B cell (primary cell): ENCODE measurements at regions of chr3 and their contacts with region 1.

Region 1: DNA sequence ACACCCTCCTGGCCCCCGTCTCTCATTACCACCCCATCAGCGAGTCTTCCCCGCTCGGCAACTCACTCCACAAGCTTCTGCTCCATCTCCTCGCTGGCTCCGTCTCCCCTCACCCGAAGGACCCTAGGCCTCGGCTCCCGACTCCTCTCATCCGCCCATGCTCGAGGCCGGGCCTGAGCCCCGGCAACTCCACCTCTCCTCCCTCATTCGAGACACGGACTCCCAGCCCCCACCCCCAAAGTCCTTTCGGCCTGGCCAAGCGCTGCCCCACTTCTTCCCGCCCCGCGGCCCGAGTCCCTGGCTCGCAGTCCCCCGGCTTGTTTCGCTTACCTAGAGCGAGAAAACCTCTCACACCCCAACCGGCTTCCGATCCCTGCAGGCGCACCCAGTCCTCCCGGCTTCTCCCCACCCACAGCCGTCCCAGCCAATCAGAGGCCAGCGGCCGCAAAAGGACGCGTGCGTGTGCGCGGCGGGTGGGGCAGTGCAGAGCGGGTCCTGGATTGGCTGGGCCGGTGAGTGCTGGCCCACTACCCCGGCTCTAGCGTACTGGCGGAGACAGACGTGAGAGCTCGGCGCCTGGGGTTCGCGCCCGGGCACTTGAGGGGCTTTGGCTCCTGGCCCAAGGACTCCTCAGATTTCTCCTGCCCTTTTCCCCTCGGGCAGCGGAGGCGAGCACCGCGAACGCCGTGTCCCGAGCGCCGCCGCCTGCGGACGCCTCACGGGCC is at the start of gene HIGD1A:
- DNase-seq: peak; percentile 94
- ATAC-seq: peak; percentile 100
- H3K4me3 ChIP-seq: peak within 1 kb of the TSS; percentile 82 to 89 (median 87)
- H3K4me3 Mint-ChIP-seq: peak within 1 kb of the TSS; percentile 98
- H3K27ac ChIP-seq: peak within 1 kb of the TSS; percentile 70 to 84
- H3K27ac Mint-ChIP-seq: peak within 1 kb of the TSS; percentile 91
- H3K4me1 ChIP-seq: peaks cover 17 to 27% of the 10 kb centered on the region in 2 donors
- H3K4me1 Mint-ChIP-seq: peaks cover 38% of the 10 kb centered on the region
- H3K27me3 ChIP-seq: peaks cover 0 to 2% (median 0%) of the 10 kb centered on the region in 4 experiments
- H3K27me3 Mint-ChIP-seq: peaks cover 19% of the 10 kb centered on the region
- CTCF ChIP-seq: no peak
- total RNA-seq, gene HIGD1A: 16.5 and 18.4 TPM in 2 replicates

Region 2: DNA sequence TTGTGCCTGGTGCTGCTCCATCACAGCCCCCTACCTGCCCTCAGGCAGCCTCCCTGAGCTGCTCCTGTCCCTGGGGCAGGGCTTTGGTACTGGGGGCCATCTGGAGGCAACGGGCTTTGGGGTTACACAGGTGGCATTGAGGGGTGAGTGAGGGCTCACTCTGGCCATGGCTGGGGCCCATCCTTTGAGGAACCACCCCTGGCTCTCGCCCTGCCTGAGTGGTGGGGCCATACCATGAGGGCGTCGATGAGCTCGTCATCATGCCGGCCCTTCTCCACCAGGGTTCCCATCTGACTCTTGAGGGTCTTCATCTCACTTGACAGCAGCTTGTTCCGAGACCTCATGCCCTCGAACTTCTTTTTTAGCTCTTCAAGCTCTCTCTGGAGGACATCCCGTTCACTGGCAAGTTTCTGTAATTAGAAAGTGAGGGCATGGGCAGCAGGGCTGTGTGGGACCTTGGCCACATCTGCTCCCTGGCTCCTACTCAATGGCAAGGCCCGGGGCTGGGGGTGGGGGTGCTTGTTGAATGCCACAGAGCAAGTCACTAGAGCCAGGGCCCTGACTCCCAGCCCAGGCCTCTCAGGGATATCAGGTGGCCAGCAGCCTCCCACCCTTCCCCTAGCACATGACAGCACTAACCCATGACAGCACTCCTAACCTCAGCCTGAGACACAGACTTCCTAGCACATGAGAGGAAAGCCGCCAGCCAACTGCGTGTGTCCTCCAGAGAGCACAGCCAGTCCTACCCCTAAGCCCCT is 64.7 kb before region 1 on chr3:
- CTCF ChIA-PET with region 1: no interaction called
- POLR2A ChIA-PET with region 1: no interaction called
- intact Hi-C with region 1: no loop called
- DNase-seq: no peak
- ATAC-seq: no peak
- H3K4me3 ChIP-seq: no peak overlapping the region
- H3K4me3 Mint-ChIP-seq: no peak overlapping the region
- H3K27ac ChIP-seq: no peak overlapping the region
- H3K27ac Mint-ChIP-seq: no peak overlapping the region
- H3K4me1 ChIP-seq: peaks cover 3 to 6% of the 10 kb centered on the region in 2 donors
- H3K4me1 Mint-ChIP-seq: peaks cover 18% of the 10 kb centered on the region
- H3K27me3 ChIP-seq: no peaks in the 10 kb centered on the region
- H3K27me3 Mint-ChIP-seq: no peaks in the 10 kb centered on the region
- CTCF ChIP-seq: no peak

Region 3: GRCh38 chr3:42772670-42773408 is 31.4 kb before region 1 on chr3 and contains the start of gene CCDC13:
- CTCF ChIA-PET with region 1: no interaction called
- POLR2A ChIA-PET with region 1: no interaction called
- intact Hi-C with region 1: loop called (anchors 1 kb)
- DNase-seq: peak; percentile 98
- ATAC-seq: peak; percentile 88
- H3K4me3 ChIP-seq: peak within 1 kb of the TSS; percentile 46 to 87 (median 62)
- H3K4me3 Mint-ChIP-seq: peak within 1 kb of the TSS; percentile 90
- H3K27ac ChIP-seq: peak within 1 kb of the TSS; percentile 66 to 81
- H3K27ac Mint-ChIP-seq: peak within 1 kb of the TSS; percentile 92
- H3K4me1 ChIP-seq: peaks cover 4 to 10% of the 10 kb centered on the region in 2 donors
- H3K4me1 Mint-ChIP-seq: peaks cover 11% of the 10 kb centered on the region
- H3K27me3 ChIP-seq: no peaks in the 10 kb centered on the region
- H3K27me3 Mint-ChIP-seq: no peaks in the 10 kb centered on the region
- CTCF ChIP-seq: no peak
- total RNA-seq, gene CCDC13: 1.9 and 2.5 TPM in 2 replicates

Region 4: GRCh38 chr3:42780892-42781700 is 23.2 kb before region 1 on chr3:
- CTCF ChIA-PET with region 1: interaction called, 5 read pairs
- POLR2A ChIA-PET with region 1: no interaction called
- intact Hi-C with region 1: loop called (anchors 2 kb)
- DNase-seq: peak; percentile 84
- ATAC-seq: peak; percentile 84
- H3K4me3 ChIP-seq: no peak overlapping the region
- H3K4me3 Mint-ChIP-seq: no peak overlapping the region
- H3K27ac ChIP-seq: no peak overlapping the region
- H3K27ac Mint-ChIP-seq: no peak overlapping the region
- H3K4me1 ChIP-seq: no peaks in the 10 kb centered on the region
- H3K4me1 Mint-ChIP-seq: peaks cover 2% of the 10 kb centered on the region
- H3K27me3 ChIP-seq: no peaks in the 10 kb centered on the region
- H3K27me3 Mint-ChIP-seq: no peaks in the 10 kb centered on the region
- CTCF ChIP-seq: peak; percentile 80

Region 5: GRCh38 chr3:42831321-42831713 is 27.0 kb after region 1 on chr3:
- CTCF ChIA-PET with region 1: interaction called, 5 read pairs
- POLR2A ChIA-PET with region 1: no interaction called
- intact Hi-C with region 1: loop called (anchors 2 kb)
- DNase-seq: peak; percentile 81
- ATAC-seq: peak; percentile 76
- H3K4me3 ChIP-seq: no peak overlapping the region
- H3K4me3 Mint-ChIP-seq: no peak overlapping the region
- H3K27ac ChIP-seq: no peak overlapping the region
- H3K27ac Mint-ChIP-seq: no peak overlapping the region
- H3K4me1 ChIP-seq: no peaks in the 10 kb centered on the region
- H3K4me1 Mint-ChIP-seq: peaks cover 4% of the 10 kb centered on the region
- H3K27me3 ChIP-seq: no peaks in the 10 kb centered on the region
- H3K27me3 Mint-ChIP-seq: peaks cover 15% of the 10 kb centered on the region
- CTCF ChIP-seq: peak; percentile 88

Region 6: GRCh38 chr3:42846685-42847522 is 42.6 kb after region 1 on chr3:
- CTCF ChIA-PET with region 1: no interaction called
- POLR2A ChIA-PET with region 1: no interaction called
- intact Hi-C with region 1: loop called (anchors 5 kb)
- DNase-seq: peak; percentile 77
- ATAC-seq: peak; percentile 92
- H3K4me3 ChIP-seq: peak overlapping the region in 2 of 5 experiments; percentile 20 to 31
- H3K4me3 Mint-ChIP-seq: peak overlapping the region; percentile 76
- H3K27ac ChIP-seq: peak overlapping the region; percentile 86 to 89
- H3K27ac Mint-ChIP-seq: peak overlapping the region; percentile 89
- H3K4me1 ChIP-seq: peaks cover 26 to 37% of the 10 kb centered on the region in 2 donors
- H3K4me1 Mint-ChIP-seq: peaks cover 28% of the 10 kb centered on the region
- H3K27me3 ChIP-seq: no peaks in the 10 kb centered on the region
- H3K27me3 Mint-ChIP-seq: no peaks in the 10 kb centered on the region
- CTCF ChIP-seq: no peak